ENCODE measurements at regions of chr5 and their contacts with region 1.

Region 1: GRCh38 chr5:55936100-55936693 is 58.6 kb downstream of the IL6ST start:
- DNase-seq: peak; percentile 38
- H3K4me3 ChIP-seq: no peak overlapping the region
- CTCF ChIP-seq: peak; percentile 87

Region 2: GRCh38 chr5:55913466-55914413 is 22.5 kb before region 1 on chr5:
- CTCF ChIA-PET with region 1: interaction called, 17 read pairs
- POLR2A ChIA-PET with region 1: no interaction called
- DNase-seq: no peak
- H3K4me3 ChIP-seq: no peak overlapping the region
- CTCF ChIP-seq: no peak

Region 3: GRCh38 chr5:55959208-55959607 is 23.0 kb after region 1 on chr5:
- CTCF ChIA-PET with region 1: interaction called, 10 read pairs
- POLR2A ChIA-PET with region 1: no interaction called
- DNase-seq: no peak
- H3K4me3 ChIP-seq: no peak overlapping the region
- CTCF ChIP-seq: no peak

Region 4: DNA sequence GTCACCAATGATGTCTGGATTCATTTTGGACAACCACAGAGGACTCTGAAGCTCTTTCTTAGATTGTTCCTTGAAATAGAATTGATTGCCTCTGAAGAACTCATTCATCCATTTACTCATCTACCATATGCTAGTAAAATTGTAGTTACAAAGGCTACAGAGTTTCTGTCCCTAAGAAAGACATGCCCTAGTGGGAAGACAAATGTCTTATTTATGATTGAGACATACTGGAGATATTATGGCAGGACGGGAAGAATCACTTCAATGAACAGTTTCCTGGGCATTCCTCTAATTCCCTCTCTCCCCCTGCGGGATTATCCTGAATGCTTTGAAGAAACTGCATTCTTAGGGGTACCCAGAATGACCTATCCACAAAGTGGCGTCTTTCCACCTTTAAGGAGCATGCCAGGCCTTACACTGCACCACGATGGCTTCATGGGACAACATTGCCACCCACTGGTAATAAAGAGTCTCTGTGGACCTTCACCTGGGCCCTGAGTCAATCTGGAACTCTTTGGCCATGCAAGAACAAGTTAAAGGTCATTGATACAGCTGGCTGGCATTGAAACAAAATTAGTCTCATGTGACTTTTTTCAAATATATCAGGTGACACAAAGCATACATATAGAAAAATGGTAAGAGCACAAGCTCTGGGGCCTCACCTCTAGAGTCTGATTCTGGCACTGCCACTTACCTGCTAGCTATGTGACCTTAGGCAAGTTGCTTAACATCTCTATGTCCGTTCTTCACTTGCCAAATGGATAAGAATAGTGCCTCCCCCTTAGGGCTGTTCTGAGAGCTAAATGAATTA is 264.9 kb after region 1 on chr5:
- CTCF ChIA-PET with region 1: interaction called, 121 read pairs
- POLR2A ChIA-PET with region 1: no interaction called
- DNase-seq: no peak
- H3K4me3 ChIP-seq: no peak overlapping the region
- CTCF ChIP-seq: peak; percentile 74

Region 5: DNA sequence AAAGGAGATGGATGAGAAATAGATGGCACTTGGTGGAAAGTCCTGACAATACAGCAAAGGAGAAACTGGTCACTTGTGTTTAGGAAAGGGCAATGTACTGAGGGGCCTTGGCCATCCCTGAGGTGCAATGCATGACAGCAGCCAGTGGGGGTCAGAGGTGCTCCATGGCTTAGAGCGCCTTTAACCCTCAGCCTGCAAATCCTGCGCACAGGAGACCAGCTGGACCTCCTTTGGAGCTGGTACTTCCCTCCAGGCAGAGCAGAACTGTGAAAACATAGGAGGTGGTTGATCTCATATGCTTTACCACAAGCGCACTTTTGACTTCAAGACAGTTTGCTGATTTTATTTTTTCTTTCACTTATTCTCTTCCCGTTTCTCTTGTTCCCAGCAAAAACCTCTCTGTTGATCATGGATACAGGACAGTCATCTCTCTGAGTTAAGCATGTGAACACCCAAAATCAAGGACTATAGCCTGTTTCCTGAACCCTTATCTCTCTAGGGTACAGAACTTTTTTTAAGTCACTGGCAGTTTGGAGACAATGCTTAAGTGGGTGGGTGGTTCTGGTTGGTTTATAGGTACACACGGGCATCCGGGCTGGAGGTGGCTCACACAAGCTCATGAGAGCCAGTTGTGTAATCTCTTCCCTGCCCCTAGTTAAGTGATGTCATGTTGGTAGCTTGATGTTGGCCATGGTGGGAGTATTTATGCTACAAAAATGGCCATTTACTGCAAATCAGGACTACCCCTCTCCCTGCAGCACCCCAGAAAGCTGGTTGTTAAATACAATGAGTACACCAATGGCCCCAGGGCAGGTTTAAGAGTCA is 334.6 kb after region 1 on chr5:
- CTCF ChIA-PET with region 1: interaction called, 84 read pairs
- POLR2A ChIA-PET with region 1: no interaction called
- DNase-seq: peak; percentile 69
- H3K4me3 ChIP-seq: no peak overlapping the region
- CTCF ChIP-seq: peak; percentile 100